ENCODE measurements at regions of chr3 and their contacts with region 1.

Region 1: DNA sequence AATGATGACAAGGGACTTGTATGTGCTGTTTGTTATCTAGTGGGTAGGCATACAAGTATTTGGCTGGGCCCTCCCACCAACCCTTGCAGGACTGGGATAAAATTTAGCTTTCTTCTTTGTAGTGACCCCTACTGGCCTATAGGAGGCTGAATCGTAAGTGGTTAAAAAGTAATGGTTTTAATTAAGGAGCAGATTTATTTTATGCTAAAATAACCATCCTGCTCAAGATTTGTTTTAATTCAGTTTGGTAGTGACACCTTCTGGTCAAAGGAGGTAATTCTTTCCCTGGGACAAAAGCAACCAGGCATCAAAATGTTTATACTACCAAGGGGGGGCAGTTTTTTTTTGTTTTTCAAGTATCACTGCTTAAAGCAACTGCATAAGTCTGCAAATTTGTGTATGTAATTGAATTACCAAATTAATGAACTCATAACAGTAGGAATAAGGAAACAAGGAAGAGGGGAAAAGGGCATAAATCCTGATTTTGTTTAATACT is 70.7 kb downstream of the TOP2B start:
- DNase-seq: peak; percentile 90
- H3K4me3 ChIP-seq: no peak overlapping the region
- H3K27ac ChIP-seq: no peak overlapping the region
- H3K4me1 ChIP-seq: peaks cover 6% of the 10 kb centered on the region
- H3K27me3 ChIP-seq: no peaks in the 10 kb centered on the region
- CTCF ChIP-seq: peak; percentile 48 to 75
- POLR2A ChIP-seq: no peak

Region 2: DNA sequence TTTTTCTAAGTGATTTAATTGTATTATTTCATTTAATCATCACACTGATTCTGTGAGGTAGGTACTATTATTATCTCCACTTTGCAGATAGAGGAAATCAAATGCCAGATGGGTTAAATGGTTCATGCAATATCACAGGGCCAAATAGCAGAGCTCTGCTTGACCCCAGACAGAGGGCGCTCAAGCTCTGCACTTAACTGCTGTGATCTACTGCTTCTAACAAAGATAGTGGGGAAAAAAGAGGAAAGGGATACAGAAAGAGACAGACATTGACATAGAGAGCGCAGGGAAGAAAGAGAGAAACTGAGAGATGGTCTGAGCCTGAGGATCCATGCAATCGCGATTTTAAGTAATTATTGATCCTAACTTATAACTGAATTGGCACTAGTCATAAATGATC is 820.3 kb before region 1 on chr3:
- CTCF ChIA-PET with region 1: interaction called, 52 read pairs
- POLR2A ChIA-PET with region 1: no interaction called
- dilution Hi-C with region 1: no loop called
- intact Hi-C with region 1: loop called (anchors 1 kb)
- DNase-seq: peak; percentile 61
- H3K4me3 ChIP-seq: no peak overlapping the region
- H3K27ac ChIP-seq: no peak overlapping the region
- H3K4me1 ChIP-seq: no peaks in the 10 kb centered on the region
- H3K27me3 ChIP-seq: no peaks in the 10 kb centered on the region
- CTCF ChIP-seq: peak; percentile 69 to 71
- POLR2A ChIP-seq: no peak

Region 3: GRCh38 chr3:25021816-25022215 is 572.2 kb before region 1 on chr3:
- CTCF ChIA-PET with region 1: interaction called, 70 read pairs
- POLR2A ChIA-PET with region 1: no interaction called
- dilution Hi-C with region 1: no loop called
- intact Hi-C with region 1: loop called (anchors 1 kb)
- DNase-seq: peak; percentile 42
- H3K4me3 ChIP-seq: no peak overlapping the region
- H3K27ac ChIP-seq: no peak overlapping the region
- H3K4me1 ChIP-seq: no peaks in the 10 kb centered on the region
- H3K27me3 ChIP-seq: no peaks in the 10 kb centered on the region
- CTCF ChIP-seq: peak; percentile 18 to 45
- POLR2A ChIP-seq: no peak

Region 4: GRCh38 chr3:25151281-25151902 is 442.7 kb before region 1 on chr3:
- CTCF ChIA-PET with region 1: interaction called, 4 read pairs
- POLR2A ChIA-PET with region 1: no interaction called
- dilution Hi-C with region 1: no loop called
- intact Hi-C with region 1: loop called (anchors 5 kb)
- DNase-seq: peak; percentile 88
- H3K4me3 ChIP-seq: peak overlapping the region in 2 of 3 experiments; percentile 1 to 49
- H3K27ac ChIP-seq: peak overlapping the region; percentile 81
- H3K4me1 ChIP-seq: peaks cover 25% of the 10 kb centered on the region
- H3K27me3 ChIP-seq: no peaks in the 10 kb centered on the region
- CTCF ChIP-seq: no peak
- POLR2A ChIP-seq: peak; percentile 21

Region 5: GRCh38 chr3:25427942-25428788 is 165.9 kb before region 1 on chr3 and contains the start of gene RARB:
- CTCF ChIA-PET with region 1: interaction called, 24 read pairs
- POLR2A ChIA-PET with region 1: interaction called, 12 read pairs
- dilution Hi-C with region 1: no loop called
- intact Hi-C with region 1: loop called (anchors 1 kb)
- DNase-seq: peak; percentile 98
- H3K4me3 ChIP-seq: peak within 1 kb of the TSS; percentile 75 to 100 (median 96)
- H3K27ac ChIP-seq: peak within 1 kb of the TSS; percentile 96
- H3K4me1 ChIP-seq: peaks cover 27% of the 10 kb centered on the region
- H3K27me3 ChIP-seq: no peaks in the 10 kb centered on the region
- CTCF ChIP-seq: no peak
- POLR2A ChIP-seq: peak; percentile 96
- total RNA-seq, gene RARB: 19.3 and 23.4 TPM in 2 replicates

Region 6: GRCh38 chr3:25455441-25456132 is 138.5 kb before region 1 on chr3:
- CTCF ChIA-PET with region 1: interaction called, 9 read pairs
- POLR2A ChIA-PET with region 1: no interaction called
- dilution Hi-C with region 1: no loop called
- intact Hi-C with region 1: loop called (anchors 1 kb)
- DNase-seq: peak; percentile 69
- H3K4me3 ChIP-seq: no peak overlapping the region
- H3K27ac ChIP-seq: peak overlapping the region; percentile 77
- H3K4me1 ChIP-seq: peaks cover 70% of the 10 kb centered on the region
- H3K27me3 ChIP-seq: no peaks in the 10 kb centered on the region
- CTCF ChIP-seq: no peak
- POLR2A ChIP-seq: no peak

Region 7: DNA sequence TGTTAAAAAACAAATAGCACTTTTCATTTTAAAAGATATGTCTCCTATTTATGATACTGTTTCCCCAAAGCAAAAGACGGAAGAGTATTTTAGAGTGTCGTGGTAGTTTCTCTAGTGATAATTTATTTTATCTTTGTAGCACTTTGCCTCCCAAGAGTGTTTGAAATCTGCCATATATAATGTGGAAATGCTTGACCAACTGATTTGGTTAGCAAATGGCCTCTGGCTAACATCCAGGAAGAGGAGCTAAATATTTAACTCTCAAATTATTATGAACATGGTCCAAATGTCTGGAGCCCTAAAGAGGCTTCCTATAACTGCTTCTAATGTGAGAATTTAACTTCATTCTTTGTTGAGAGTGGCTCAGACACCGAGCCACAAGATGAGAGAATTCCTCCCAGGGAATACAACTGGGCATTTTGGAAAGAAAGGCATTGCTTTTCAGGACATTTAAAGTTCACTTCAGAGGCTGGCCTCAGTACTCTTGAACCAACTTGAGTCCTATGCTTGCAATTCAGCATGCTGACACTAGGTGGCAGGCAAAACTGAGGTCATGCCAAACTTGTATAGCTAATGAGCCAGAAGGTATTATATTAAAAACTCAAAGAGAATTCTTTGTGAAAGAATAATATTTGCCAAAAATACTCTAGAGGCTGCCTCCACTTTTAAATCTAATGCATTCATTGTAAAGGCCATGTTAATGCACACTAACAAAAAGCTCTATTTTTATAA is 61.5 kb before region 1 on chr3:
- CTCF ChIA-PET with region 1: interaction called, 16 read pairs
- POLR2A ChIA-PET with region 1: no interaction called
- dilution Hi-C with region 1: no loop called
- intact Hi-C with region 1: no loop called
- DNase-seq: no peak
- H3K4me3 ChIP-seq: no peak overlapping the region
- H3K27ac ChIP-seq: no peak overlapping the region
- H3K4me1 ChIP-seq: peaks cover 6% of the 10 kb centered on the region
- H3K27me3 ChIP-seq: no peaks in the 10 kb centered on the region
- CTCF ChIP-seq: peak; percentile 40 to 48
- POLR2A ChIP-seq: no peak